ENCODE measurements at regions of chr11 and their contacts with region 1.

Region 1: DNA sequence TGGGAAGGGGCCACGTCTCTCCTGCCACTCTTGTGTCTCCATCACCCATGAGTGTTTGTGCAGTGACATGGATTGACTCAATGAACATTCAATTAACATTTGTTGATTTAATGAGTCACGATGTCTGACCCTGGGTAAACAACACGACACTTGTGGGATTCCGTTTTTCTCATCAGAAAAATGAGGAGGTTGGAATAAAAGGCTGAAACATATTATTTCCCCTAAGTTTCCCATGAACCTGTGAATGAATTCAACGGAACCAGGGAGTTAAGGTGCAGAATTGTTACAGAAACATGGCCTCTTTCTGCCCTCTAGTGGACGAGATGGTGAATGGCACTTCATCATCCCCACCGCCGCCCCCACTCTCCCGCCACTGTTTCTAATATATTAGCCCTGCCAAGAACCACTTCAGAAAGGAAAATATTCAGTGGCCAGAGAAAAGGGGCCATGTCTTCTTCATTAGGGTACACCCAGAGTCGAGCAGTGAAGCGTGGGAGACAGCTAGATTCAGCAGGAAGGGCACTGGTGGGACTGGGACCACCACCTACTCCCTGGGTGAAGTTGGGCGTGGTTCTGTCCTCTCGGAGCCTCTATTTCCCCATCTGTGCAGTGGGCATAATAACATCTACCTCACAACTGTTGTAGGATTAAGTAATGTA is 46.3 kb upstream of the SYT13 start:
- DNase-seq: peak in 1 of 2 donors; percentile 45
- ATAC-seq: peak; percentile 39 to 81 (median 72)
- H3K4me3 ChIP-seq: peak overlapping the region in 7 of 10 donors; percentile 17 to 45 (median 40)
- H3K27ac ChIP-seq: peak overlapping the region in 8 of 10 donors; percentile 51 to 78 (median 69)
- H3K4me1 ChIP-seq: peaks cover 0 to 21% (median 8%) of the 10 kb centered on the region in 9 donors
- H3K27me3 ChIP-seq: peaks cover 0 to 5% (median 0%) of the 10 kb centered on the region in 7 donors
- CTCF ChIP-seq: peak; percentile 77 to 91 (median 86)

Region 2: DNA sequence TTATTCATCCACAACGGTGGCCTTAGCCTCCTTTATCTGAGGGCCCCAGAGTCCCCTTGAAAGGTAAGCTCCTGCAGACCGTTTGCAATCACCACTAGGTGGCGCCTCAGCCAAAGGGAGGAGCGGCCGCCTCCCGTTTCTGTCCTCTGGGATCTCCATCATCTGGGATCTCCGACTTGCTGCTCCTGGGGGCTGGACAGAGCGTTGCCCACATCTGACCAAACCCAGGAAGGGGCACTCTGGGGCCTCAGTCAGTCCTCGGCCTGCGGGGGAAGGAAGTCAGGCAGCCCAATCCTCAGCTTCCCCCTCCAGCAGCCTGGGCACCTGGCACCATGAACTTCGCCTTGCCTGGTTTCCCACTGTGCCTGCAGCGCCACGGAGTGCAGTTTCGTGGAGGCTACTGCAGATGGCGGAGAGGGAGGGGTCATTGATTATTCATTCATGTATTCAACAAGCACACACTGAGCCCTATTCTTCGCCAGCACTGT is 405.2 kb before region 1 on chr11:
- intact Hi-C with region 1: loop called in 5 of 10 experiments (anchors 5 to 10 kb)
- DNase-seq: peak; percentile 64 to 68
- ATAC-seq: peak in 7 of 8 donors; percentile 25 to 67 (median 52)
- H3K4me3 ChIP-seq: no peak overlapping the region
- H3K27ac ChIP-seq: no peak overlapping the region
- H3K4me1 ChIP-seq: peaks cover 5 to 35% (median 14%) of the 10 kb centered on the region in 9 donors
- H3K27me3 ChIP-seq: no peaks in the 10 kb centered on the region
- CTCF ChIP-seq: peak; percentile 64 to 93 (median 88)

Region 3: DNA sequence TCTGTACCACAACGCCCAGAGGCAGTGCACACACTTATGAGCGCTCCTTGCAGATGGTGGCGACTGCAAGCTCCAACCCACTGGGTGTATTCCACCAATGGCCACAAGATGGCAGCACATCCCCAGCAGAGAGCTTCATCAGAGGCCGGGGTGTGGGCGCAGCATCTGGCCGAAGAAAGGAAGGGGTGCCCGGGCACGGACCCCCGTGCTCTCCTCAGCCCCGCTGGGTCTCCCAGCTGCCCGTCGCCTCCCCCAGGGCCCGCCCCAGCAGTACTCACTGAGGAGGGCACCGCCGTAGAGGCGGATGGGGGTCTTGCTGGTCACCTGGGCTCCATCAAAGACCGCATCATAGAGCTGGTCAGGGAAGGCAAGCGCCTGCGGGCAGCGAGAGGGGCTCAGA is 395.9 kb before region 1 on chr11:
- intact Hi-C with region 1: loop called in 9 of 10 experiments (anchors 5 to 10 kb)
- DNase-seq: peak; percentile 79 to 82
- ATAC-seq: peak; percentile 16 to 67 (median 56)
- H3K4me3 ChIP-seq: no peak overlapping the region
- H3K27ac ChIP-seq: no peak overlapping the region
- H3K4me1 ChIP-seq: peaks cover 20 to 52% (median 34%) of the 10 kb centered on the region in 9 donors
- H3K27me3 ChIP-seq: no peaks in the 10 kb centered on the region
- CTCF ChIP-seq: peak in 8 of 9 donors; percentile 92 to 97 (median 95)

Region 4: DNA sequence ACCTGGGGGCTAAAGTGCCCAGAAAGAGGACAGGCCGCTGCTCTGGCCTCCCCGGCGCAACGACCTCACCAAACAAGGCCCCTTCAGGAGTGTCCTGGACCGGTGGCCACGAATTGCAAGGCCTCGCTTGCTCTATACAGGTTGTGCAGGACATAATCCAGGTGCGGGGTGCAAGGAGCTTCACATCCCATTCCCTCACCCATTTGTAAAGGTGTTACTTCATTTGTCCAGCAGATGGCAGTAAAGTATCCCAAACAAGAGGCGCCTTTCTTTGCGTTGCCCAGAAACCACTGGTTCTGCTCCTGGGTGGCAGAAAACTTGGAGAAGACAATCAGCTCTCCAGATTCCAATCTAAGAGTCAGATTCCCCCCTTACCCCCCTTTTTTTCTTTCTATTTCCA is 221.8 kb before region 1 on chr11:
- intact Hi-C with region 1: loop called (anchors 1 to 5 kb)
- DNase-seq: peak in 1 of 2 donors; percentile 64
- ATAC-seq: peak; percentile 45 to 82 (median 66)
- H3K4me3 ChIP-seq: no peak overlapping the region
- H3K27ac ChIP-seq: no peak overlapping the region
- H3K4me1 ChIP-seq: peaks cover 0 to 5% (median 0%) of the 10 kb centered on the region in 9 donors
- H3K27me3 ChIP-seq: peaks cover 0 to 32% (median 13%) of the 10 kb centered on the region in 7 donors
- CTCF ChIP-seq: peak; percentile 75 to 88 (median 83)

Region 5: DNA sequence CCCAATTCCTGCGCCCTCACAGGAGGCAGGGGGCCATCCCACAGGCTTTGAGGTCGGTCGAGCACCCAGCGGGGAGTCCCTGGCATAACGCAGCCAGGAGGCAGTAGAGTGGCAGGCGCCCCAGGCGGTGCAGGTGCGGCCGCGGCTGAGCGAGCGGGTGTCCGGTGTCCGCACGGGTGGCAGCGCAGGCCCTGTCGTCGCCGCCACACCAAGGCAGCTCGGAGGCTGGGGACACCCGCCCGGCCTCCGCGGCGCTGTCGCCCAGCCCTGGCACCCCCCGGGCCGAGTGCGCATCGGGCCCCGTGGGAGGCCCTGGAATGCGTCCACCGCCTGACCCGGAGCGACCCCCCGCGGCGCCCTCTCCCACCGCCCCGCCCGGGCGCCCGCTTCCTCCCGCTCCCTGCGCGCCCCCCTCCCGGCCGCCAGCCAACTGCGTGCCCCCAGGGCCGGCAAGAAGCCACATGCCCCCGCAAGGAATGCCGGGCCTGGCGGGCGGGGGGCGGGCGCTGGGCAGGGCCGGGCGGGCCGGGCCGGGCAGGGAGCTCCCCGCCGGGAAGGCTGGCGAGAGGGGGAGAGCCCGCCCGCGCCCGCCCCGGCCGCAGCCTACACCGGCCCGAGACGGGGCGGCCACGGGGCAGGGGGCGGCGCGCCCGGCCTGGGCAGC is 152.1 kb before region 1 on chr11:
- intact Hi-C with region 1: no loop called
- DNase-seq: peak in 1 of 2 donors; percentile 67
- ATAC-seq: peak; percentile 56 to 80 (median 69)
- H3K4me3 ChIP-seq: peak overlapping the region; percentile 31 to 68 (median 54)
- H3K27ac ChIP-seq: peak overlapping the region; percentile 81 to 91 (median 88)
- H3K4me1 ChIP-seq: peaks cover 15 to 52% (median 26%) of the 10 kb centered on the region in 9 donors
- H3K27me3 ChIP-seq: peaks cover 0 to 20% (median 0%) of the 10 kb centered on the region in 7 donors
- CTCF ChIP-seq: peak in 8 of 9 donors; percentile 26 to 66 (median 46)

Region 6: GRCh38 chr11:45252134-45252855 is 80.1 kb before region 1 on chr11:
- intact Hi-C with region 1: loop called in 2 of 10 experiments (anchors 5 kb)
- DNase-seq: peak; percentile 43 to 73
- ATAC-seq: peak; percentile 76 to 91 (median 86)
- H3K4me3 ChIP-seq: peak overlapping the region in 1 of 10 donors; percentile 17
- H3K27ac ChIP-seq: no peak overlapping the region
- H3K4me1 ChIP-seq: peaks cover 0 to 3% (median 0%) of the 10 kb centered on the region in 9 donors
- H3K27me3 ChIP-seq: peaks cover 0 to 7% (median 4%) of the 10 kb centered on the region in 7 donors
- CTCF ChIP-seq: peak; percentile 35 to 74 (median 64)

Region 7: DNA sequence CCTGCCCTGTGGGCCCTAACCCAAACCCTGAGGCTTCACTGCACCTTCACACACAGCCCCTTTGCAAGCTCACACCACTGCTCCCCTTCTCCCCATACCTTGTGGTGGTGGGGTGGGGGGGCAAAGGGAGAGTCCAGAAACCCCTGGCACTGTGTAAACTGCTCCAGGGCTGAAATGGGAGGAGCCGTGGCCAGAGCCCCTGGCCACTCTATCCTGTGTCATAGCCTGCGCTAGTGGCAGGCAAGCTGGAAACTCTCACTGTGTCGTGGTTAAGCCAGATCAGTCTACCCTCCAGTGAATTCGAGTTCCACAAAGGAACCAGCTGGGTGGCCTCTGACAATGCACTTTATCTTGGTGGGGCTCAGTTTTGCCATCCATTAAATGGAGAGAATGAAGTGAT is 37.9 kb before region 1 on chr11:
- intact Hi-C with region 1: loop called in 1 of 10 experiments (anchors 5 kb)
- DNase-seq: no peak
- ATAC-seq: peak in 1 of 8 donors; percentile 57
- H3K4me3 ChIP-seq: no peak overlapping the region
- H3K27ac ChIP-seq: no peak overlapping the region
- H3K4me1 ChIP-seq: no peaks in the 10 kb centered on the region
- H3K27me3 ChIP-seq: peaks cover 0 to 40% (median 22%) of the 10 kb centered on the region in 7 donors
- CTCF ChIP-seq: no peak

Region 8: GRCh38 chr11:46504817-46505613 is 1172.6 kb after region 1 on chr11:
- intact Hi-C with region 1: no loop called
- DNase-seq: no peak
- ATAC-seq: no peak
- H3K4me3 ChIP-seq: no peak overlapping the region
- H3K27ac ChIP-seq: peak overlapping the region in 9 of 10 donors; percentile 30 to 68 (median 51)
- H3K4me1 ChIP-seq: peaks cover 0 to 27% (median 9%) of the 10 kb centered on the region in 9 donors
- H3K27me3 ChIP-seq: no peaks in the 10 kb centered on the region
- CTCF ChIP-seq: no peak